Esophagus squamous epithelium (tissue), 5 donors: ENCODE measurements at regions of chr11 and their contacts with region 1.

Region 1: DNA sequence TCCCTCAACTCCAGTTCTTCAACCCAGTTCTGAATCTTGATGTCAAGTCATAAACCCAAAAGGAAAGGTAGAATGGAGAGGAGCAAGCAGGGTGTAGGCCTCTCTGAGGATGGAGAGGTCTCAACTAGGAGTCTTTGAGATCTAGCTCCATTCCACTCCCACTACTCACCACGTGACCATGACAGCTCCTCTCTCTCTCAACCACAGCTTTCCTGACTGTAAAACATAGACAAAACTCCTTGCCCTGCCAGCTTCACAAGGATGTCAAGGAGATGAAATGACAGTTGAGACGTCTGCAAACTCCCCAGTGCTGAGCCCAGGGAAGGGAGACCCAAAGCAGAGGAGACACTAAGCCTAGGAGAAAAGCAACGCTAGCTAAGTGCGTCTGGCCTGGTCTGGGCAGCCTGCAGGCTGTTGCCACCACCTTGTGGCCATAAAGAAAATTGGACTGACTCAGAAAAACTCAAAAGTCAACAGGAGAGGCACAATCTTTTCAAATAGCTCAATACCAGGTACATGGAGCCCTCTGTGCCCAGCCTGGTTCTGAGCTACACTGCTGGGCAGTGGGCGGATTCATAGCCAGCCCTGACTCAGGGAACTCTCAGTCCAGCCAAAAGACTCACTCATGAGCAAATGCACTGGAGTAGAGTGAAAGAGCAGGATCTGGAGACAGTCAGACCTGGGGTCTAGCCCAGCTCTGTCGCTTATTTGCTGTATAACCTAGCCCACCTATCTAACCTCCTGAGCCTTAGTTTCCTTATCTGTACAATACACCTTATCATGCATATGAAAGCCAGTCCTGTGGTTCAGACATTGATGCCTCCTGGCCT is 3.4 kb downstream of the CLPB start:
- DNase-seq: no peak
- H3K4me3 ChIP-seq: no peak overlapping the region
- H3K27ac ChIP-seq: no peak overlapping the region
- H3K4me1 ChIP-seq: peaks cover 7 to 32% (median 12%) of the 10 kb centered on the region in 3 donors
- H3K27me3 ChIP-seq: no peaks in the 10 kb centered on the region
- CTCF ChIP-seq: peak; percentile 55 to 77 (median 70)
- POLR2A ChIP-seq: no peak

Region 2: DNA sequence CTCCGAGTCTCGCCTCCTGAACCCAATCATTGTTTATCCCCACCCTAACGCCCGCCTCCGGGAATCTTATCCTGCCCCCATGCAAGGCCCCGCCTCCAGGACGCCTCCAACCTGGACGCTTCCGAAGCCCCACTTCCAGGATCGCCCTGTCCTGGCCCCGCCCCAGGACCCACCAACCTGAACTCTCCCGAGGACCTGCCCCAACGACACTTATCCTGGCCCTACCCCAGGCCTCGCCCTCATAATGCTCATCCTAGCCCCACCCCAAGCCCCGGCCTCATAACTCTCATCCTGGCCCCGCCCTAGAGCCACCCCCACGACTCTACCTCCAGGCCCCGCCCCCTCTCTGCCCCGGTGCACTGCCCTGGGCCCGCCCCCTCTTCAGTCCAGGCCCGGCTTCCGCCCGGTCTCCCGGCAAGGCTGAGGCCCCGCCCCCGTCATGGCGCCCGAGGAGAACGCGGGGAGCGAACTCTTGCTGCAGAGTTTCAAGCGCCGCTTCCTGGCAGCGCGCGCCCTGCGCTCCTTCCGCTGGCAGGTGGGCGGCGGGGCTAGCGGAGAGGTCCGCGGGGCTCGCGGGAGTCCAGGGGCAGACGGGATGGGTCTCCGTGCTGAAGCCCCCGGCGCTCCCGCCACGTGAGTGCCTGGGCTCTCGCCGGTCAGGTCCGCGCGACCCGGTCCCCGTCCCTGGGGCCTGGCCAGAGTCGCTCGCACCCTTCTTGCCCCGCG is 643.7 kb before region 1 on chr11:
- intact Hi-C with region 1: loop called (anchors 10 kb)
- DNase-seq: peak; percentile 85
- H3K4me3 ChIP-seq: peak overlapping the region; percentile 42 to 85 (median 79)
- H3K27ac ChIP-seq: peak overlapping the region; percentile 80 to 93 (median 92)
- H3K4me1 ChIP-seq: peaks cover 0 to 19% (median 3%) of the 10 kb centered on the region in 3 donors
- H3K27me3 ChIP-seq: no peaks in the 10 kb centered on the region
- CTCF ChIP-seq: no peak
- POLR2A ChIP-seq: peak in 1 of 4 donors; percentile 42